A673 (cell line): ENCODE measurements at regions of chr1 and their contacts with region 1.

Region 1: GRCh38 chr1:119115311-119115710 is 25.1 kb downstream of the WARS2 start:
- DNase-seq: no peak
- H3K4me3 ChIP-seq: no peak overlapping the region
- H3K27ac ChIP-seq: no peak overlapping the region
- H3K4me1 ChIP-seq: peaks cover 3% of the 10 kb centered on the region
- H3K27me3 ChIP-seq: no peaks in the 10 kb centered on the region
- CTCF ChIP-seq: no peak

Region 2: DNA sequence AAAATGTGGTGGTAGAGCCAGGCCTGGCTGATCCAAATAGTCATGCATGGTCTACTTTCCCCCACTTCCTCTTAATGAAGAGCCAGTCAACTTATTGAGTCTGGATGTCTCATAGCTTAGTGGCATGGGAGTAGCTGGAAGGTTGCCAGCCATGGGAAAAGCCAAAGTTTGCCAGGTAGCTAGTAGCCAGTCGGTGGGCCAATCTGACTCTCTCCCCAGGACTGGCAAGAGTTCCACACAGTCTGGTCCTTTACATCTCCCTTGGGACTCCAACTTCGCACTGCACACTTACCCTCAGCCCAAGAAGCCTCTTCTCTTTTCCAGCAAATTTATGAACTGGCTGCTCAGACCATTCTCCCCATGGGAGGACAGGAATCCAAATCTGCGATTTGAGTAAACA is 16.9 kb after region 1 on chr1:
- CTCF ChIA-PET with region 1: no interaction called
- POLR2A ChIA-PET with region 1: interaction called, 20 read pairs
- intact Hi-C with region 1: no loop called
- DNase-seq: no peak
- H3K4me3 ChIP-seq: no peak overlapping the region
- H3K27ac ChIP-seq: no peak overlapping the region
- H3K4me1 ChIP-seq: no peaks in the 10 kb centered on the region
- H3K27me3 ChIP-seq: no peaks in the 10 kb centered on the region
- CTCF ChIP-seq: no peak